ENCODE measurements at regions of chr13 and their contacts with region 1.

Region 1: GRCh38 chr13:46530084-46530935 is 22.7 kb upstream of the LRCH1 start:
- DNase-seq: peak; percentile 80
- H3K4me3 ChIP-seq: no peak overlapping the region
- H3K27me3 ChIP-seq: peaks cover 11% of the 10 kb centered on the region
- CTCF ChIP-seq: no peak

Region 2: GRCh38 chr13:46495651-46496050 is 34.7 kb before region 1 on chr13:
- CTCF ChIA-PET with region 1: no interaction called
- POLR2A ChIA-PET with region 1: no interaction called
- DNase-seq: no peak
- H3K4me3 ChIP-seq: no peak overlapping the region
- H3K27me3 ChIP-seq: peaks cover 2% of the 10 kb centered on the region
- CTCF ChIP-seq: no peak

Region 3: GRCh38 chr13:46553886-46554858 is 23.9 kb after region 1 on chr13:
- CTCF ChIA-PET with region 1: interaction called, 15 read pairs
- POLR2A ChIA-PET with region 1: no interaction called
- DNase-seq: no peak
- H3K4me3 ChIP-seq: peak overlapping the region; percentile 100
- H3K27me3 ChIP-seq: no peaks in the 10 kb centered on the region
- CTCF ChIP-seq: peak; percentile 41